ENCODE measurements at regions of chr13 and their contacts with region 1.

Region 1: DNA sequence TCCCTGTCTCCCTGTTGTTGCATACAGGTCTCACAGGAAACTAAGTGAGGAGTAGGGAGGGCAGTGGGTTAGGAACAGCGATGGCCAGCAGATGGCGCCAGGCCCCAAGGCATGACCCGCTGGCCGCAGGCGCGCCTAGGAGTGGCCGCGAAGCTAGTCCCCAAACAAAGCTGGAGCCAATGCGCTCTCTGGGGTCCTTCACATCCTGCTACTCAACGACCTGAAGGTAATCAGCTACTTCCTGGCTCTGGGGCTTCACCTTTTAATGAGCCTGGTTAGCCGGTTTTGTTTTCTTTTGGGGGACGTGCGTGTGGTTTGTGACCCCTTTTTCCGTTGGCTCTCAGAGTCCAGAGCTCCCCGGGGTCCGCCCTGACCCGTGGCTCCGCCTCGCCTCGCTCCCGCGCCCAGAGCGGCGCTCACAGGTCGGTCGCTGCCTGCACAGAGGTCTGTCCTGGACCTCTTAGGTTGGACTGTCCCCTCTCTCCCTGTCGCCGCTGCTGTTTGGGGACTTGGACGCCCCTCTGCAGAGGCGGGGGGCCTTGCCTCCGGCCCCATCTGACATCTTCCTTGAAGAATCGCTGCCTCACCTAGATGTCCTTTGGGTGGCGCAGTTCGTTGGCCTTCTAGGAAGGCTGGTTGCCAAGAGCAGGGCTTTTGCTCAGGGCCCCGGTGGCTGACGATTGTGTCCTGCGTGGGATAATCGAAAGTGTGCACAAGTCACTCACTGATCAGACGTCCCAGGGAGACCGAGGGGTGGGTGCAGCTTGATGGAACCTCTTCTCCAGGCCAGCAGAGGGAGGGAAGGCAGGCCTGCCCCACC is 62.1 kb upstream of the GTF3A start:
- DNase-seq: peak; percentile 86

Region 2: GRCh38 chr13:26985285-26985878 is 376.9 kb before region 1 on chr13:
- CTCF ChIA-PET with region 1: interaction called, 25 read pairs
- POLR2A ChIA-PET with region 1: interaction called, 4 read pairs
- DNase-seq: peak; percentile 68

Region 3: GRCh38 chr13:27374650-27375049 is 12.4 kb after region 1 on chr13:
- CTCF ChIA-PET with region 1: interaction called, 20 read pairs
- POLR2A ChIA-PET with region 1: interaction called, 4 read pairs
- DNase-seq: peak; percentile 81